Gastrocnemius medialis (tissue), 4 donors: ENCODE measurements at regions of chrX and their contacts with region 1.

Region 1: GRCh38 chrX:53831662-53832635 is 145.4 kb upstream of the HUWE1 start:
- DNase-seq: no peak
- ATAC-seq: no peak
- H3K4me3 ChIP-seq: no peak overlapping the region
- H3K27ac ChIP-seq: no peak overlapping the region
- H3K4me1 ChIP-seq: no peaks in the 10 kb centered on the region
- H3K27me3 ChIP-seq: no peaks in the 10 kb centered on the region
- CTCF ChIP-seq: no peak
- POLR2A ChIP-seq: no peak

Region 2: GRCh38 chrX:52166840-52167239 is 1665.1 kb before region 1 on chrX:
- in situ Hi-C with region 1: no loop called
- intact Hi-C with region 1: no loop called
- DNase-seq: no peak
- ATAC-seq: no peak
- H3K4me3 ChIP-seq: no peak overlapping the region
- H3K27ac ChIP-seq: no peak overlapping the region
- H3K4me1 ChIP-seq: no peaks in the 10 kb centered on the region
- H3K27me3 ChIP-seq: peaks cover 0 to 2% (median 0%) of the 10 kb centered on the region in 3 donors
- CTCF ChIP-seq: no peak
- POLR2A ChIP-seq: no peak

Region 3: DNA sequence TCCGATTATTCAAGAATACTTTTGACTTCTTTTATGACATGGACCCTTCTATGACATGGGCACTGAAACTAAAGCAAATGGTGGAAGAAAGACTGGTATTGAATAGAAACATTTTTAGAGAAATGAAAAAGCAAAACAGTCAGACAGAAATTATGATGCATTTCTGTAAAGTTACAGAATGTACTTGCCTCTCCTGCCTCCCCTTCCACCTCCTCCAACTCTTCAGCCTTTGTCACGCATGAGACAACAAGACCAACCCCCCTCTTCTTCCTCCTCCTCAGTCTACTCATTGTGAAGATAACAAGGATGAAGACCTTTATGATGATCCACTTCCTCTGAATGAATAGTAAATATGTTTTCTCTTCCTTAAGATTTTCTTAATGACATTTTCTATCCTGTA is 99.2 kb before region 1 on chrX:
- in situ Hi-C with region 1: loop called in 1 of 4 experiments (anchors 25 kb)
- intact Hi-C with region 1: no loop called
- DNase-seq: no peak
- ATAC-seq: no peak
- H3K4me3 ChIP-seq: no peak overlapping the region
- H3K27ac ChIP-seq: no peak overlapping the region
- H3K4me1 ChIP-seq: no peaks in the 10 kb centered on the region
- H3K27me3 ChIP-seq: no peaks in the 10 kb centered on the region
- CTCF ChIP-seq: no peak
- POLR2A ChIP-seq: no peak

Region 4: GRCh38 chrX:53864591-53864990 is 32.6 kb after region 1 on chrX:
- in situ Hi-C with region 1: no loop called
- intact Hi-C with region 1: no loop called
- DNase-seq: no peak
- ATAC-seq: no peak
- H3K4me3 ChIP-seq: no peak overlapping the region
- H3K27ac ChIP-seq: no peak overlapping the region
- H3K4me1 ChIP-seq: no peaks in the 10 kb centered on the region
- H3K27me3 ChIP-seq: no peaks in the 10 kb centered on the region
- CTCF ChIP-seq: no peak
- POLR2A ChIP-seq: no peak